A549 (cell line): ENCODE measurements at regions of chr17 and their contacts with region 1.

Region 1: GRCh38 chr17:15257258-15257788 is 7.8 kb downstream of the PMP22 start:
- DNase-seq: peak; percentile 74 to 82
- ATAC-seq: peak; percentile 8 to 37; a peak in 4 of 6 replicates
- H3K4me3 ChIP-seq: no peak overlapping the region
- H3K27ac ChIP-seq: peak overlapping the region in 1 of 2 experiments; percentile 12; a peak in 1 of 6 replicates
- H3K4me1 ChIP-seq: peaks cover 12% of the 10 kb centered on the region; the same call in 2 of the 3 replicates
- CTCF ChIP-seq: peak; percentile 97
- EP300 ChIP-seq: no peak
- POLR2A ChIP-seq: no peak
- RAD21 ChIP-seq: peak; percentile 78 to 81

Region 2: DNA sequence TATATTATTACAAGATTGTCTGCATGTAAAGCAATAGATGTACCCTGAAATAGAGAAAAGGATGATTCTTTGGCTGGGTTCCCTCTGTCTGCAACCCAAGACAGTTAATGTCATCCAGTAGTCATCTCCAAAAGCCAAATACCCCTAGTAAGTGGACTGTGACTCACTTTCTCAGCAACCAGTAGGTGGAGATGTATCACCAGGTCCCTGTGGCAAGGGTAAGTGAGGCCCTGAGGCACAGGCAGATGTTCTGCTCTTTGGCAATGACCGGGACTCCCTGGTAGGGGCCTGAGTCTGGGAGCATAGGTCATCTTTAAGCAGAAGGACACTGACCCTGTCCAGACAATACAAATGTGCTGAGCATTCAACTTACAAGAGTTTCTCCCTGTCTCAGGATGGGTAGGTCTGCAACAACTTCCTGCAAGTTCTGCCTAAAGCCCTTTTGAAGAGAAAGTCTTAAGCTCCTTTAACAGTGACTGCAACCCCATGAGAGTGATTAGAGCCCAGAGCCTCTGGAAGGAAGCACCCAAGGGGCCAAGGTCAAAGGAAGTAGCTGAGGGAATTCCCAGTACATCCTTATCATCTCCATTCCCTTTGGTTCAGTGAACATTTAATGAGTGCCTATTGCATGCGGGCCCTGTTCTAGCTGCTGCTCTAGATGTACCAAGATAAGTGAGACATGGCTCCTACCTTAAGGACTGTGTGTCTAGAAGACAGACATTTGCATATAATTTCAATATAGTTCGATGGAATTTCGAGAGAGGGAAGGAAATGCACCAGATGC is 24.1 kb before region 1 on chr17:
- CTCF ChIA-PET with region 1: interaction called, 16 read pairs
- POLR2A ChIA-PET with region 1: no interaction called
- DNase-seq: peak; percentile 57 to 59
- ATAC-seq: peak; percentile 76 to 77
- H3K4me3 ChIP-seq: no peak overlapping the region
- H3K27ac ChIP-seq: no peak overlapping the region
- H3K4me1 ChIP-seq: no peaks in the 10 kb centered on the region
- CTCF ChIP-seq: peak; percentile 53
- EP300 ChIP-seq: no peak
- POLR2A ChIP-seq: no peak
- RAD21 ChIP-seq: peak; percentile 54 to 62

Region 3: GRCh38 chr17:15273141-15273793 is 15.9 kb after region 1 on chr17:
- CTCF ChIA-PET with region 1: interaction called, 16 read pairs
- POLR2A ChIA-PET with region 1: interaction called, 9 read pairs
- DNase-seq: peak; percentile 73 to 89
- ATAC-seq: peak; percentile 83 to 89
- H3K4me3 ChIP-seq: 0 out of 3 replicates have a peak overlapping the region, but pooled peaks have one; percentile 3
- H3K27ac ChIP-seq: peak overlapping the region; percentile 76 to 80
- H3K4me1 ChIP-seq: peaks cover 42% of the 10 kb centered on the region
- CTCF ChIP-seq: peak; percentile 21; the same call in 1 of the 3 replicates
- EP300 ChIP-seq: peak; percentile 53 to 65; a peak in 2 of 5 replicates
- POLR2A ChIP-seq: no peak
- RAD21 ChIP-seq: no peak; a peak in 1 of 5 replicates

Region 4: GRCh38 chr17:15341385-15341849 is 84.1 kb after region 1 on chr17 and contains the start of gene TEKT3:
- CTCF ChIA-PET with region 1: interaction called, 14 read pairs
- POLR2A ChIA-PET with region 1: no interaction called
- DNase-seq: peak; percentile 81 to 90
- ATAC-seq: peak; percentile 100
- H3K4me3 ChIP-seq: peak within 1 kb of the TSS; percentile 52
- H3K27ac ChIP-seq: peak within 1 kb of the TSS in 1 of 2 experiments; percentile 51; a peak in 3 of 6 replicates
- H3K4me1 ChIP-seq: peaks cover 10% of the 10 kb centered on the region
- CTCF ChIP-seq: no peak
- EP300 ChIP-seq: no peak
- POLR2A ChIP-seq: no peak
- RAD21 ChIP-seq: no peak
- polyA plus RNA-seq, gene TEKT3: 0.21 and 0.49 TPM in 2 replicates

Region 5: GRCh38 chr17:15409721-15410250 is 152.5 kb after region 1 on chr17:
- CTCF ChIA-PET with region 1: interaction called, 49 read pairs
- POLR2A ChIA-PET with region 1: interaction called, 3 read pairs
- DNase-seq: no peak
- ATAC-seq: no peak
- H3K4me3 ChIP-seq: no peak overlapping the region
- H3K27ac ChIP-seq: no peak overlapping the region
- H3K4me1 ChIP-seq: no peaks in the 10 kb centered on the region
- CTCF ChIP-seq: no peak
- EP300 ChIP-seq: no peak
- POLR2A ChIP-seq: no peak
- RAD21 ChIP-seq: no peak

Region 6: GRCh38 chr17:15469260-15469659 is 211.9 kb after region 1 on chr17:
- CTCF ChIA-PET with region 1: interaction called, 13 read pairs
- POLR2A ChIA-PET with region 1: no interaction called
- DNase-seq: no peak
- ATAC-seq: no peak
- H3K4me3 ChIP-seq: no peak overlapping the region
- H3K27ac ChIP-seq: no peak overlapping the region
- H3K4me1 ChIP-seq: peaks cover 3% of the 10 kb centered on the region
- CTCF ChIP-seq: no peak
- EP300 ChIP-seq: no peak
- POLR2A ChIP-seq: no peak
- RAD21 ChIP-seq: no peak

Region 7: GRCh38 chr17:15507896-15508295 is 250.6 kb after region 1 on chr17:
- CTCF ChIA-PET with region 1: interaction called, 248 read pairs
- POLR2A ChIA-PET with region 1: interaction called, 5 read pairs
- DNase-seq: no peak
- ATAC-seq: no peak
- H3K4me3 ChIP-seq: no peak overlapping the region
- H3K27ac ChIP-seq: no peak overlapping the region
- H3K4me1 ChIP-seq: peaks cover 15% of the 10 kb centered on the region
- CTCF ChIP-seq: no peak
- EP300 ChIP-seq: no peak
- POLR2A ChIP-seq: no peak
- RAD21 ChIP-seq: no peak